Sciatic nerve (tissue), 2 donors: ENCODE measurements at regions of chr1 and their contacts with region 1.

Region 1: DNA sequence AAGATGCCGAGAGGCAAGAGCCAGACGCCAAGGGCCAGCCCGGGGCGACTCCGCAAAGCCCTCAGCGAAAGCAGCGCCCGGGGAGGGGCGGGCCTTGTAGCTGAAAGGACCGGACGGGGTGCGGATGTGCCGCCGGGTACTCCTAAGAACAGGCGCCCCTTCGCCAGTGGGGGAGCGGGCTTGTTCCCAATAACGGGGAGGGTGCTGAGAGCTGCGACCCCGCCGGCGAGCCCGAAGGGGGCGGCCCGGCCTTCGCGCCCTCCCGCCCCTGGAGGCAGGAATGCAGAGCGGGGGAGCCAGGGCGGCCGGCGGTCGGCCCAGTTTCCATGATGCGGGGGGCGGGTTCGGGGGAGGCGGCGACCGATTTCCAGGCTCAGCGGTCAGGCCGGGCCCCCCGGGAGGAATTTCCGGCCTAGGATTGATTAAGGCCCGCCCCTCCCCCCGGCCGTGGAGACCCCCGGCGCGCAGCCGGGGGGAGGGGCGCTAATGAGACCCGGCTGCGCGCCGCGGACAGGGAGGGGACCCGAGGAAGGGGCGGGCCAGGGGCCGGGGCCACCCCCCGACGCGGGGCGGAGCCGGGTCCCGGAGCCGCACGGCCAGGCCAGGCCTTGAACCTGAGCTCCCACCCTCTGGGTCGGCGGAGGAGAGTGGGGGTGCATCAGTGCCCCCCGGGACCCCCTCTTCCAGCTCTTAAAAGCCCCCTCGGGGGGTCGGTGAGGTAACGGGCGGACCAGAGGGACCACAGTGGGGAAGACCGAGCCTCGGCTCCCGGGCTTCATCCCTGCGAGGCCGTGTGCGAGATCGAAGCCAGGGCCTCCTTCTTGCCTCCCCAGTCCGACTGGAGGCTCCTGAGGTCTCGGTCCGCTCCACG is 898 bp upstream of the TMEM200B start:
- DNase-seq: peak; percentile 94
- ATAC-seq: peak; percentile 83

Region 2: GRCh38 chr1:29096231-29096886 is 28.2 kb before region 1 on chr1:
- intact Hi-C with region 1: no loop called
- DNase-seq: no peak
- ATAC-seq: no peak

Region 3: DNA sequence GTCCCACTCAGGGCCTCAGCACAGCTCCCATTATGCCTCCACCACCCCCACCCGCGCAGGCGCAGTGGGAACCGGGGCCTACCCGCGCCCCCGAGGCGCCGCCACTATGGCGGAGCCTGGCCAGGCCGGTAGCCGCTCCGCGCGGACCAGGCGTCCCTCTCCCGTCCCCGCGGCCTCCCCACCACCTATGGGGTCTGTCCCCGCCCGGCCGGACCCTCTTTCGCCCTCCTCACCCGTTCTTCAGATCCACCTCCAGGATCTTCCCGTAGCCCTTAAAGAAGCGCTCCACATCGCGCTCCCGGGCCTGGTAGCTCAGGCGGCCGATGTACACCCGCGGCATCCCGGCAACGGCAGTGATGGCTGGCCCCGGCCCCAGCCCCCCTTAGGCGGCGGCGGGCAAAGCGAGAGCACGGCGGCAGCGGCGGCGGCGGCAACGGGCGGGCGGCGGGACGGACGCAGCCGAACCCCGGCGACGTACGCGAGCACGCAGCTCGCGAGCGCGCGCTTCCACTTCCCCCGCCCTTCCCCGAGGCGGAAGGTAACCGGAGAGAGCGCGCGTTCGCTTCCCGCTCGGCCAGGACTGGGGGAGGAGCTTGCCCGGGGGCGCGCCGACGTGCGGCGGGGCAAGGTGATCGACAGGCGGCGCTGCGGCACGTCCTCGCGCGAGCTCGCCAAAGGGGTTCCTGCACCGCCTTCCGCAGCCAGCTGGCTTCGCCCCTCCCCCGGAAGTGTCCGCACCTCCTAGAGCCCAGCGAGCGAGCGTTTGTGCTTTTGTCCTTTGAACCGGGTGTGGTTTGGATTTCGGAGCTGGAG is 57.0 kb after region 1 on chr1 and contains the start of gene SRSF4:
- intact Hi-C with region 1: loop called (anchors 10 kb)
- DNase-seq: peak; percentile 99
- ATAC-seq: peak; percentile 96
- total RNA-seq, gene SRSF4: 95.0 TPM

Region 4: DNA sequence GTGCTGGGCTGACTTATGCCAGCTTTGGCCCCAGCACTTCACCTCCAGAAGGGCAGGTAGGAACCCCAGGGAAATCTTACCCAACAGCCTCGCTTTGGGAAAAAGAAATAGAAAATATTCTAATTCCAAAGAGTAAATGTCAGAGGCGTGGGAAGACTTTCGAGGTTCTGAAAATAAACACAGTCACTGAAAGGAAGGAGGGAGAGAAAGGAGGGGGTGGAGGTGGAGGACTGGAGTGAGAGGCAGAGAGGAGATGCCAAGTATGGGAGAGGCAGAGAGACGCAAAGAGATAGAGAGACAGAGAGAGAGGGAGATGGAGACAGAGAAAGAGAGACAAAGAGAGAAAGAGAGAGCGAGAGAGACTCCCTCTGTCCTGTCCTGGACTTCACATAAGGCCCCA is 506.8 kb after region 1 on chr1:
- intact Hi-C with region 1: no loop called
- DNase-seq: no peak
- ATAC-seq: no peak